GM13976 (cell line): ENCODE measurements at regions of chr6 and their contacts with region 1.

Region 1: DNA sequence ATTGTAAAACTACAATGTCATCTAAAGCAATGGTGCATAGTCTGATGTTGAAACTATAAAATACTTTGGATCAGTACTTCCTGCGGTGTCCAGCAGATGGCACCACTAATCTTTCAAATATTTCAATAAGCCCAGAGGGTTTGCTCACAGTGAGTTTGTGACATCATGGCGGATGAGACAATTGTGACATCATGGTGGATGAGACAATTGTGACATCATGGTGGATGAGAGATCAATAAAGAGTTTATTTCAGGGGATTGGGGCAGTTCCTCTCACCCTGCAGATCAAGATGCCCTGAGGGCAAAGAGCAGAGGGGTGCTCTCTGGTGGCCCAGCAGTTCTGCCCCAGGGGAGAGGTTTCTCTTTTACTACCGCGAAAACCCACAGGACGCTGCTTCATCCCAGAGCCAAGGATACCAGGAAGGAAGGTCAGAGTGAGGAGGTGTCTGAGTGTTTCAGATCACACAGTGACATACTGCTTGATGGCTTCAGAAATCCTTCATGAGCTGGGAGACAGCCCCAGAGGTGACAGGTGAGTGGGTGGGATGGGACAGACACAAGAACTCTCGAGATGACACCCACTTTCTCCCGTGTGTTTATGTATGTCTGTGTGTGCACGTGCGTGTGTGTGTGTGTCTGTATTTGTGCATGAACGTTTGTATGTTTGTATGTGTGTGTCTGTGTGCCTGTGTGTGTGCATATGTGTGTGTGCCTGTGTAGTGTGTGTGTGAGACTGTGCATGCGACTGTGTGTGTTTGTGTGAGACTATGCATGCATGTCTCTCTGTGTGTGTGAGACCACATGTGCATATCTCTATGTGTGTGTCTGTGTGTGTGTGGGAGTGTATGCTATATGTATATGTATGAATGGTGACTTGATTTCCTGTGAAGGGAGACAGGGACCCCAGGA is 7.3 kb upstream of the ULBP2 start:
- DNase-seq: peak; percentile 55
- CTCF ChIP-seq: peak; percentile 61

Region 2: GRCh38 chr6:150004783-150005717 is 70.5 kb after region 1 on chr6:
- in situ Hi-C with region 1: loop called (anchors 5 kb)
- DNase-seq: peak; percentile 93
- CTCF ChIP-seq: no peak